CD14-positive monocyte (primary cell): ENCODE measurements at regions of chr22 and their contacts with region 1.

Region 1: GRCh38 chr22:46296257-46297150 is at the start of gene GTSE1:
- DNase-seq: peak; percentile 97 to 100 (median 99)
- H3K4me3 ChIP-seq: peak within 1 kb of the TSS; percentile 52 to 84 (median 74)
- H3K4me3 Mint-ChIP-seq: peak within 1 kb of the TSS; percentile 83 to 92
- H3K27ac ChIP-seq: peak within 1 kb of the TSS; percentile 90 to 96
- H3K27ac Mint-ChIP-seq: peak within 1 kb of the TSS; percentile 94 to 97 (median 96)
- H3K4me1 ChIP-seq: peaks cover 35 to 47% of the 10 kb centered on the region in 2 donors
- H3K4me1 Mint-ChIP-seq: peaks cover 49% of the 10 kb centered on the region
- H3K27me3 ChIP-seq: no peaks in the 10 kb centered on the region
- H3K27me3 Mint-ChIP-seq: no peaks in the 10 kb centered on the region
- CTCF ChIP-seq: no peak
- polyA plus RNA-seq, gene GTSE1: 0.04 TPM in 1 of 3 donors, not detected in the others

Region 2: DNA sequence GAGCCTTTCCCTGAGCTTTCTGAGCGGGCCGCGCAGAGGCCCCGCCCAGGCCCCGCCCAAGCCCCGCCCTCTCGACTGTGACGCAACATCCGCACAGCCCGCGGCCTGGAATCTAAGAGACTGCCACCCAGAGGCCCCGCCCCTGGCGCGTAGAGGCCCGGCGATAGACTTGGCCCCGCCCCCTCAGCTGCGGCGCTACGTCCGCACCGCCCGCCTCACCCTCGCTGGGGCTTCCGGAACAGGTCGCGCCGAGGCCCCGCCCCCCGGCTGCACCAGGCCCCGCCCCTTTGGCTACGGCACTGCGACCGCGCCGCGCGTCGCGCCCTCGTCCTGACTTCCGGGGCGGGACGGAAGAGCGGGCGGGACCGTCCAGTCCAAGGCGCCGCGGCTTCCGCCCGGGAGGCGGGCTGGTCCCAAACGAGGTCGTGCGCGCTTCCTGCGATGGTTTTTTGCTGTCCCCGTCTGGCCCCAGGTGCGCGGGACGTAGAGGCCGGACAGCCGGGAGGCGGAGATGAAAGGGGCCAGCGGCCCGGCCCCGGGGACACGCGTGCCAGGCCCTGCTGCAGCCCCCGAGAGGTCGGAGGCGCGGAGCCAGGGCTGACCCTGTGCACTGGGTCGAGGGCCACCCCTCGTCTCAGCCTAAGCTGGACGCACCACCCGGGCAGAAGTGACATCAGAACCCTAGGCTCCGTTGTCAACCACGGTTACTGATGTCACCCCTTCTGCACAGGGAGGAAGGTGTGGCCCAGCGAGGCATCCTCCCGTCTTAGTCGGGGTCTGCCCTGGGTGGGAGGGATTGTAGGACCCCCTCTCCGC is 260.6 kb before region 1 on chr22:
- intact Hi-C with region 1: loop called in 1 of 2 experiments (anchors 10 kb)
- DNase-seq: peak; percentile 99 to 100 (median 99)
- H3K4me3 ChIP-seq: peak overlapping the region; percentile 51 to 83 (median 67)
- H3K4me3 Mint-ChIP-seq: peak overlapping the region; percentile 76 to 89
- H3K27ac ChIP-seq: peak overlapping the region; percentile 73 to 96
- H3K27ac Mint-ChIP-seq: peak overlapping the region; percentile 90 to 95 (median 93)
- H3K4me1 ChIP-seq: peaks cover 24 to 41% of the 10 kb centered on the region in 2 donors
- H3K4me1 Mint-ChIP-seq: peaks cover 37% of the 10 kb centered on the region
- H3K27me3 ChIP-seq: no peaks in the 10 kb centered on the region
- H3K27me3 Mint-ChIP-seq: no peaks in the 10 kb centered on the region
- CTCF ChIP-seq: no peak

Region 3: DNA sequence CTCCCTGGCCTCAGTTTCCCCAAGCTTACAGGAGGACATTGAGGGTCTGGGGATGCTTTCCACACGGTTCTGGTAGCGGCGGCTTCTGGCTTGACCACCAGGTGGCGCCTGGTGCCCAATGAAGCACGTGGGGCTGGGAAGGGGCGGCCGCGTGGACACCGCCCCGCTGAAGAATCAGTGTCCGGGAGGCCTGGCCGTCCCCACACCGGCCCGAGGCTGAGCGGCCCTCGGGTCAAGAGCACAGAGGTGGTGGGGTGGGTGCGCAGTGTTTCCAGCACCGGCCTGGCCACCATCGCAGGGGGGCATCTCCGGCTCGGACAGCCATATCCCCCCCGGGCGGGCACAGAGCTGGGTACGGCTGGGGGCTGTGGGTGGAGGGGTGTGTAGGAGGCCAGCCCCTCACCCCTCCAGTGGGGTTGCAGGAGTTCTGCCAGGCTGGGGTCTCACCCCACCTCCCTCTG is 174.0 kb before region 1 on chr22:
- intact Hi-C with region 1: loop called (anchors 1 to 5 kb)
- DNase-seq: peak; percentile 52 to 73 (median 66)
- H3K4me3 ChIP-seq: no peak overlapping the region
- H3K4me3 Mint-ChIP-seq: no peak overlapping the region
- H3K27ac ChIP-seq: no peak overlapping the region
- H3K27ac Mint-ChIP-seq: no peak overlapping the region
- H3K4me1 ChIP-seq: peaks cover 4 to 18% of the 10 kb centered on the region in 2 donors
- H3K4me1 Mint-ChIP-seq: no peaks in the 10 kb centered on the region
- H3K27me3 ChIP-seq: no peaks in the 10 kb centered on the region
- H3K27me3 Mint-ChIP-seq: peaks cover 4 to 10% (median 9%) of the 10 kb centered on the region in 3 donors
- CTCF ChIP-seq: peak; percentile 98

Region 4: DNA sequence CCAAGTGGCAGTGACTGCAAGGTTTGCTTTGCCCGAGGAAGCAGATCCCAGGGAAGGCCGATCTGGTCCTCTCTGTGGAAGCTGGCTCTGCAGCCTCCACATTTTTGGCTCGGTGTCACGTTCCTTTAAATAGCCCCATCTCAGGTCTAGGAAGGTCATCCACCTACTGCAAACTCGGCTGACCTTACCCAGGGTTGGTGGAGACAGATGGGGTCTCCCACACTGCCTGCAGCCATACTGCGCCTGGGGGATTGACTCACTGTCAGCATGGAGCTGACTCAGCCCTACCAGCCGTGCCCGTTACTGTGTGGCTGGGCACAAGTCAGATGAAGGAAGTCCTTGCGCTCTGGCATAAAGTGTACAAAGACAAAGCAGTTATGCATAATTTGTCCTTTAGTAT is 63.3 kb before region 1 on chr22:
- intact Hi-C with region 1: no loop called
- DNase-seq: peak; percentile 22 to 64 (median 22)
- H3K4me3 ChIP-seq: no peak overlapping the region
- H3K4me3 Mint-ChIP-seq: no peak overlapping the region
- H3K27ac ChIP-seq: peak overlapping the region in 1 of 2 donors; percentile 45
- H3K27ac Mint-ChIP-seq: peak overlapping the region in 1 of 7 donors; percentile 40
- H3K4me1 ChIP-seq: peaks cover 0 to 21% of the 10 kb centered on the region in 2 donors
- H3K4me1 Mint-ChIP-seq: peaks cover 6% of the 10 kb centered on the region
- H3K27me3 ChIP-seq: no peaks in the 10 kb centered on the region
- H3K27me3 Mint-ChIP-seq: no peaks in the 10 kb centered on the region
- CTCF ChIP-seq: no peak

Region 5: GRCh38 chr22:46275455-46276122 is 20.9 kb before region 1 on chr22:
- intact Hi-C with region 1: no loop called
- DNase-seq: no peak
- H3K4me3 ChIP-seq: no peak overlapping the region
- H3K4me3 Mint-ChIP-seq: no peak overlapping the region
- H3K27ac ChIP-seq: peak overlapping the region in 1 of 2 donors; percentile 29
- H3K27ac Mint-ChIP-seq: peak overlapping the region in 2 of 7 donors; percentile 52 to 62
- H3K4me1 ChIP-seq: no peaks in the 10 kb centered on the region
- H3K4me1 Mint-ChIP-seq: no peaks in the 10 kb centered on the region
- H3K27me3 ChIP-seq: no peaks in the 10 kb centered on the region
- H3K27me3 Mint-ChIP-seq: no peaks in the 10 kb centered on the region
- CTCF ChIP-seq: no peak

Region 6: DNA sequence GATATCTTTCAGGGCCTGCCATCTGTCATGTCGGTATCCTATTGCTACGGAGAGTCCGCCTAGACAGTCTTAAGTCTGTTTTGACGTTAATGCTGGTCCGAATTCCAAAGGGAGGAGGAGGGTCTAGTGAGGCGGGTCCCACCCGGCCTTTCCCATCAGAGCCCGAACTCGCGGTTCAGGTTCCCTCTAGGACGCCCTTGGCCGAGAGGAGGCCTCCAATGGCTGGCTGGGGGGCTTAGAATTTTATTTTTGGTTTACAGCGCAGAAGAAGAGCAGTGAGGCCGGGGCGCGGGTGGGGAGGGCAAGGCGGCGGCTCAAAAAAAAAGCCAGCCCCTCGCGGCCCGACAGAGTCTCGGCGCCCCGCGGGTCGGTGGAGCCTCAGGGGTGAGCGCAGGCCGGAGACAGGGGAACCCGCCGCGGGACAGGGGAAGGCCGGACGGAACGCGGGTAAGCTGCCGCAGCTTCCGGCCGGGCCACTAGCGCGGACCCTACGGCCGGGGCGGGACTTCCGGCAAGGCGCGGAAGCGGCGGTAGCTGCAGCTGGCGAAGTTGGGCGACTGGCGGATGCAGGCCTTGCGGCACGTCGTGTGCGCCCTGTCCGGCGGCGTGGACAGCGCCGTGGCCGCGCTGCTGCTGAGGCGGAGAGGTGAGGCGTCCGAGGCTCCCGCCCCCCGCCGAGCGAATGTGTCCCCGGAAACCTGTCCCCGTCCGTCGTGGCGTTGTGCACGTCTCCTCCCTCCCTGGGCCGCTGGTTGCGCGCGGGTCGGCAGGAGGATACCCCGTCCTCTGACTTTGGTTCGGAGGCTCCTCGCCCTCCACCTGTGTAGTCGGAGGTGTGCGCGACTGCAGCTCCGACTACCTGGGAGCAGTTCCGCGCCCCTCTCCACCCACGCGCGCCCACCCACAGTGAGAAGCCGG is 39.0 kb after region 1 on chr22 and contains the start of gene TRMU:
- intact Hi-C with region 1: loop called in 1 of 2 experiments (anchors 2 kb)
- DNase-seq: peak; percentile 83 to 86 (median 83)
- H3K4me3 ChIP-seq: peak within 1 kb of the TSS; percentile 61 to 97 (median 87)
- H3K4me3 Mint-ChIP-seq: peak within 1 kb of the TSS; percentile 92 to 96
- H3K27ac ChIP-seq: peak within 1 kb of the TSS; percentile 53 to 83
- H3K27ac Mint-ChIP-seq: peak within 1 kb of the TSS; percentile 85 to 94 (median 90)
- H3K4me1 ChIP-seq: peaks cover 10 to 14% of the 10 kb centered on the region in 2 donors
- H3K4me1 Mint-ChIP-seq: peaks cover 15% of the 10 kb centered on the region
- H3K27me3 ChIP-seq: no peaks in the 10 kb centered on the region
- H3K27me3 Mint-ChIP-seq: no peaks in the 10 kb centered on the region
- CTCF ChIP-seq: no peak
- polyA plus RNA-seq, gene TRMU: 4.7 to 32.9 (median 5.6) TPM